Naive thymus-derived CD4-positive, alpha-beta T cell (primary cell): ENCODE measurements at regions of chr1 and their contacts with region 1.

Region 1: GRCh38 chr1:52404116-52404986 is at the starts of genes ORC1 and PRPF38A:
- DNase-seq: peak; percentile 89 to 97 (median 96)
- ATAC-seq: peak; percentile 99
- H3K4me3 ChIP-seq: peak within 1 kb of the TSS; percentile 83
- H3K4me3 Mint-ChIP-seq: peak within 1 kb of the TSS; percentile 96 to 100 (median 99)
- H3K27ac ChIP-seq: peak within 1 kb of the TSS; percentile 92
- H3K27ac Mint-ChIP-seq: peak within 1 kb of the TSS; percentile 95 to 100 (median 98)
- H3K4me1 ChIP-seq: peaks cover 10 to 16% of the 10 kb centered on the region in 2 donors
- H3K4me1 Mint-ChIP-seq: peaks cover 11 to 66% (median 47%) of the 10 kb centered on the region in 7 donors
- H3K27me3 ChIP-seq: no peaks in the 10 kb centered on the region
- H3K27me3 Mint-ChIP-seq: no peaks in the 10 kb centered on the region
- total RNA-seq, gene ORC1: 0.97 to 25.2 (median 1.3) TPM
- total RNA-seq, gene PRPF38A: 62.1 to 98.7 (median 81.6) TPM

Region 2: DNA sequence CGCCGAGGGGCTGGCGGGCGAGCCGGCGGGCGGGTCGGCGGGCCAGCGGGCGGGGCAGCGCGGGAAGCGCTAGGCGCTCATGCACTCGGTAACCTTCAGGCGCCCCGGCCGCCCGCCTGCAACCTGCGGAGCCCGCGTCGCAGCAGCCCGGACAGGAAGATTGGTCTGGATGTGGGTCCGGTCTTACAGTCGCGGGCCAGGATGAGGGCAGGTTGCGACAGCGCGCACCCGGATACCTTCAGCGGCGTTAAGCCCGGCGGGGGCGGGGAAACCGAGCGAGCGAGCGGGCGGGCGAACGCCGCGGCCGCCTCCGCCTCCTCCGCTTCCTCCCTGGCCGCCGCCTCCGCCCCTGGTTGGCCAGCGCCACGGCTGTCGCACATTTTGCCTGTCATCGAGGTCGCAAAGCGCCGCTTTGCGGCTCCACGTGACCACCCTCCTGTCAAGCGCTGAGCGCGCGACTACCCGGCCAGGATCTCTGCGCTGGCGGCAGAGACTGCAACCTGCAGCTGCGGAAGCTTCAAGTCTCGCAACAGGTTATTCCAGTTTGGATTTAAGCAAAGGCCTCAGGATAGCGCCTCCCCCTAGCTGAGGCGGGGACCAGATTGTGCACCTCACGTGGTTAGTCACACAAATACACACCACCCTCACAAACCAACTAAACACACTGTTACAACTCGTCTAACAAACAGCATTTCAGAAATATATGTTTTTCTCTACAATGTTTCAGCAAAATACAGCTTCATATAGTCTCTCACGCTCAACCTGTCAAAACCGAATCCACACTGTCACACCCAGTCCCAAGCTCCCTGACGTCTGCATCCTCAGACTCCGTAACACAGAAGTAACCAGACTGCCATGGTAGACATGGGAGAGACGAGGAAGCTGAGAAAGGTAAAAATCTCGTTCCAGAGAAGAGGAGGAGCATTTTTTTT is 1444.2 kb before region 1 on chr1 and contains the start of gene FAF1:
- CTCF ChIA-PET with region 1: no interaction called
- POLR2A ChIA-PET with region 1: no interaction called
- intact Hi-C with region 1: loop called in 1 of 2 experiments (anchors 10 kb)
- DNase-seq: peak; percentile 94 to 98 (median 98)
- ATAC-seq: peak; percentile 98
- H3K4me3 ChIP-seq: peak within 1 kb of the TSS; percentile 61
- H3K4me3 Mint-ChIP-seq: peak within 1 kb of the TSS; percentile 82 to 98 (median 92)
- H3K27ac ChIP-seq: peak within 1 kb of the TSS; percentile 71
- H3K27ac Mint-ChIP-seq: peak within 1 kb of the TSS; percentile 64 to 97 (median 96)
- H3K4me1 ChIP-seq: peaks cover 7% of the 10 kb centered on the region in 2 donors
- H3K4me1 Mint-ChIP-seq: peaks cover 14 to 35% (median 24%) of the 10 kb centered on the region in 7 donors
- H3K27me3 ChIP-seq: no peaks in the 10 kb centered on the region
- H3K27me3 Mint-ChIP-seq: peaks cover 0 to 9% (median 0%) of the 10 kb centered on the region in 5 donors
- total RNA-seq, gene FAF1: 46.4 to 66.6 (median 52.5) TPM

Region 3: DNA sequence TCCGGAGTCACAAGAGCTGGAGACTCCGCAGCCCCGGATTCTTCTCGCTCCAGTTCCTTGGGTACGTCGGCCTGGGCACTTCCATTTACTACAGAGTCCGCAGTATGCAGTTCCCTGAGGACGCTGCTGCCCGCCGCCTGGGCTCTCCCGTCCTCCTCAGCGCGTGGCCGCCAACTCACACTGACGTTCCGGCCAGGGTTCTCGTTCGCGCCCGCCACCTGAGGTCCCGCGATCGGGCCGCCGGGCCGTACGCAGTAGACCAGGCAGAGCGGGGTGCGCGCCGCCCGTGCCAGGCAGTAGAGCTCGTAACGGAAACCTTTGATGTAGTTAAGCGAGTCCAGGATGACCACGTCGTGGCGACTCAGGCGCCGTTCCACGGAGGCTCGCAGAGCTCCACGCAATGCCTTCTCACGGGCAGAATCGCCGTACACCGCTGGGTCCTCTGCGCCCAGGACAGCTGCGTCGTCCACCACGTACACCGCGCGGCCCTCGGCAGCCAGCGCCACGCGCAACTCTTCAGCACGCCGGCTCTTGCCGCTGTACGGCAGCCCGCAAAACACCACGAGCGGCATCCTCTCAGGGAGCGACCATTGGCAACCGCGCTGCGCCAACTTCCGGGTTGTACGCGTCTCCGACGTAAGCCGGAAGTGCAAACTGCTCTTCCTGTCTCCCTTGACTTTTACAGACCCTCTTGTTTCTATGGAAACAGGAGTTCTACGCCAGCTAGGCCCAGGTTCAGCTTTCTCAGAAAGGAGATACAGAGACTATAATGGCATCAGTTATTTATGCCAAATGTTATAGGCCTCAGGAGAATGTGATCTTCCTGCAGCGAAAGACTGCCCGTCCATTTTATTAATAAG is 370.9 kb before region 1 on chr1 and contains the start of gene KTI12:
- CTCF ChIA-PET with region 1: no interaction called
- POLR2A ChIA-PET with region 1: interaction called, 4 read pairs
- intact Hi-C with region 1: loop called in 1 of 2 experiments (anchors 1 kb)
- DNase-seq: peak; percentile 72 to 92 (median 89)
- ATAC-seq: peak; percentile 95
- H3K4me3 ChIP-seq: peak within 1 kb of the TSS; percentile 94
- H3K4me3 Mint-ChIP-seq: peak within 1 kb of the TSS; percentile 91 to 96 (median 93)
- H3K27ac ChIP-seq: peak within 1 kb of the TSS; percentile 73
- H3K27ac Mint-ChIP-seq: peak within 1 kb of the TSS; percentile 92 to 97 (median 96)
- H3K4me1 ChIP-seq: peaks cover 20 to 22% of the 10 kb centered on the region in 2 donors
- H3K4me1 Mint-ChIP-seq: peaks cover 18 to 52% (median 38%) of the 10 kb centered on the region in 7 donors
- H3K27me3 ChIP-seq: no peaks in the 10 kb centered on the region
- H3K27me3 Mint-ChIP-seq: no peaks in the 10 kb centered on the region
- total RNA-seq, gene KTI12: 14.5 to 23.5 (median 16.5) TPM

Region 4: GRCh38 chr1:52385376-52385775 is 19.0 kb before region 1 on chr1:
- CTCF ChIA-PET with region 1: no interaction called
- POLR2A ChIA-PET with region 1: no interaction called
- intact Hi-C with region 1: no loop called
- DNase-seq: no peak
- ATAC-seq: no peak
- H3K4me3 ChIP-seq: no peak overlapping the region
- H3K4me3 Mint-ChIP-seq: no peak overlapping the region
- H3K27ac ChIP-seq: no peak overlapping the region
- H3K27ac Mint-ChIP-seq: no peak overlapping the region
- H3K4me1 ChIP-seq: no peaks in the 10 kb centered on the region
- H3K4me1 Mint-ChIP-seq: peaks cover 0 to 2% (median 0%) of the 10 kb centered on the region in 7 donors
- H3K27me3 ChIP-seq: no peaks in the 10 kb centered on the region
- H3K27me3 Mint-ChIP-seq: no peaks in the 10 kb centered on the region

Region 5: GRCh38 chr1:52636721-52637695 is 232.7 kb after region 1 on chr1:
- CTCF ChIA-PET with region 1: interaction called, 3 read pairs
- POLR2A ChIA-PET with region 1: interaction called, 9 read pairs
- intact Hi-C with region 1: loop called (anchors 1 kb)
- DNase-seq: peak; percentile 39 to 88 (median 83)
- ATAC-seq: peak; percentile 79
- H3K4me3 ChIP-seq: peak overlapping the region; percentile 19
- H3K4me3 Mint-ChIP-seq: peak overlapping the region; percentile 78 to 94 (median 86)
- H3K27ac ChIP-seq: peak overlapping the region; percentile 95
- H3K27ac Mint-ChIP-seq: peak overlapping the region; percentile 96 to 100 (median 99)
- H3K4me1 ChIP-seq: peaks cover 63 to 82% of the 10 kb centered on the region in 2 donors
- H3K4me1 Mint-ChIP-seq: peaks cover 52 to 85% (median 79%) of the 10 kb centered on the region in 7 donors
- H3K27me3 ChIP-seq: no peaks in the 10 kb centered on the region
- H3K27me3 Mint-ChIP-seq: peaks cover 0 to 11% (median 0%) of the 10 kb centered on the region in 5 donors

Region 6: GRCh38 chr1:52674497-52675384 is 270.4 kb after region 1 on chr1:
- CTCF ChIA-PET with region 1: no interaction called
- POLR2A ChIA-PET with region 1: no interaction called
- intact Hi-C with region 1: no loop called
- DNase-seq: no peak
- ATAC-seq: no peak
- H3K4me3 ChIP-seq: no peak overlapping the region
- H3K4me3 Mint-ChIP-seq: peak overlapping the region in 1 of 10 donors; percentile 28
- H3K27ac ChIP-seq: no peak overlapping the region
- H3K27ac Mint-ChIP-seq: peak overlapping the region in 4 of 9 donors; percentile 55 to 67 (median 58)
- H3K4me1 ChIP-seq: no peaks in the 10 kb centered on the region
- H3K4me1 Mint-ChIP-seq: peaks cover 0 to 18% (median 4%) of the 10 kb centered on the region in 7 donors
- H3K27me3 ChIP-seq: no peaks in the 10 kb centered on the region
- H3K27me3 Mint-ChIP-seq: no peaks in the 10 kb centered on the region

Region 7: DNA sequence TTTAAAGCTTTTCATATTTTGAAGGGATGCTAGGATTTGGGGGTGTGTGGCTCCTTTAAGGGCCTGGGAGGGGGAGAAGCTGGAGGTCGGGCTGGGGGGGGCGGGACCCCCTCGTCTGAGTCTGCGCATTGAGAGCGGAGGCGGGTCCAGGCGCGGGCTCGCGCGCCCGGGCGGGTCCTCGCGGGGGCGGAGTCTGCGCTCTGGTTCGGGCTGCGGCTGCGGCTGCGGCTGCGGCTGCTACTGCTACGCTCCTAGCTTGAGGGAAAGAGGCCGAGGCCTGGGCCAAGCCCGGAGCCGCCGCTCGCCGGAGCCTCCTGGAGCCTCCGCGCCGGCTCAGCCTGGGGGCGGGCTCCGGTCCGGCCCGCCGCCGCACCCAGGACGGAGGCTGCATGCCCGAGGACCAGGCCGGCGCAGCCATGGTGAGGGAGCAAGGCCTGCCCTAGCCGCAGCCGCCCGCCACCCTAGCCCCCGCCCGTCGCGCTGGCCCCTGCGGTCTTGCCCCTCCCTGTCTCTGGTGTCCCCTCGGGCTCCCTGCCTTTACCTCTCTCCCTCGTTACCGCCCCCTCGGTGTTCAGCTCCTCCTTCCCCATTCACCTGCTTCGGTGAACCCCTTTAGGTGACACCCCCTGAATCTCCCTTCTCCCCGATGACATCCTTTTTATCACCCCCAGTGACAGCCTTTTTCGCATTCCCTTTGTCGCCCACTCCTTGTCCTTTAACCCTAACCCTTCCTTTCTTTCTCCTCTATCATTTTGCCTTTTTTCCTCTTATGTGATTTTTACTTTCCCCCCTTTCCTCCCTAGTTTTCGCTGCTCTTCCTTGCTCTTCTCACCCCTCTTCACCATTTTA is 322.1 kb after region 1 on chr1 and contains the start of gene ZYG11B:
- CTCF ChIA-PET with region 1: no interaction called
- POLR2A ChIA-PET with region 1: no interaction called
- intact Hi-C with region 1: loop called in 1 of 2 experiments (anchors 1 kb)
- DNase-seq: peak; percentile 80 to 93 (median 88)
- ATAC-seq: peak; percentile 97
- H3K4me3 ChIP-seq: peak within 1 kb of the TSS; percentile 85
- H3K4me3 Mint-ChIP-seq: peak within 1 kb of the TSS; percentile 88 to 99 (median 97)
- H3K27ac ChIP-seq: peak within 1 kb of the TSS; percentile 89
- H3K27ac Mint-ChIP-seq: peak within 1 kb of the TSS; percentile 72 to 97 (median 90)
- H3K4me1 ChIP-seq: peaks cover 12 to 19% of the 10 kb centered on the region in 2 donors
- H3K4me1 Mint-ChIP-seq: peaks cover 24 to 60% (median 54%) of the 10 kb centered on the region in 7 donors
- H3K27me3 ChIP-seq: no peaks in the 10 kb centered on the region
- H3K27me3 Mint-ChIP-seq: peaks cover 0 to 6% (median 0%) of the 10 kb centered on the region in 5 donors
- total RNA-seq, gene ZYG11B: 14.9 to 26.8 (median 17.9) TPM

Region 8: DNA sequence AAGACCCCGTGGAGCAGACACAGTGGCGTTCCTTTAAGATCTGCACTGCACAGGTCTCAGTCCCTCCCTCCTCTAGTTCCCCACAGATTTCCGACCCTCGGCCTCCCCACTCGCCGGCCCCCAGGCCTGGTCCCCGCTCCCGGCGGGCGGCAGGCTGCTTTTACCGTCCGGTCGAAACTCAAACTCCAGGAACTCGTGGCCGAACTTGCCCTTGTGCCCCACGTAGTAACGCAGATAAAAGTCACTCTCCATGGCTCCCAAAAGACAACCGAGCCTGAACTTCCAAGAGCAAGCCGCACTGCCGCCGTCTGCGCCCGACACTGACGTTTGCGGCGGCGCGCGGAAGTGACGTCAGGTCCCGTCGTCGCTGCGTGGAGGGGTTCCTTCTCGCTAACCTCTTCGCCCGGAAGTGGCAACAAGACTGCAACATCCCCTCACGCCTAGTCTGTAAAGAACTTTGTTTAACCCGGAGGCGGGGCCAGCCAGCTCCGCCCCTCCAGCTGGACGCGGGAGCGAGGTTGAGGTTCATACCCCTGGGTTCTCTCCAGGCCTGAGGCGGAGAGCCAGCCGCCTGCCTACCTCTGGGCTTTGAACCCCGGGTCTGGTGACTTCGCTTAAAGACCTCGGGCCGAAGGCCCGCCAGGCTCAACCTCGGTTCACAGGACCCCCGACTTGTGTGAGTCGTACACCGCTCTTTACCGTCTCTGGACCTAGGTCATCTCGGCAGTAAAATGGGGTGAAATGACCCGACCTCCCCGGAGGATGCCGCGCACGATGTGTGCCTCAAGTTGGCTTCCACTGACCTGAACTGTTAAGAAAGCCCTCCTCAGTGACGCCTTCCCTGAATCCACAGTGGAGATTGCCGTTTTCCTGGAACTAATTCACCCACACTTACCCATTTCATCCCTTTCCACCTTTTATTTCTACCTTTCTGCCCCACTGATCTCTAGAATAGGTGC is 834.1 kb after region 1 on chr1 and contains the start of gene MAGOH:
- CTCF ChIA-PET with region 1: no interaction called
- POLR2A ChIA-PET with region 1: no interaction called
- intact Hi-C with region 1: loop called in 1 of 2 experiments (anchors 1 kb)
- DNase-seq: peak; percentile 90 to 96 (median 95)
- ATAC-seq: peak; percentile 98
- H3K4me3 ChIP-seq: peak within 1 kb of the TSS; percentile 97
- H3K4me3 Mint-ChIP-seq: peak within 1 kb of the TSS; percentile 96 to 99 (median 98)
- H3K27ac ChIP-seq: peak within 1 kb of the TSS; percentile 94
- H3K27ac Mint-ChIP-seq: peak within 1 kb of the TSS; percentile 92 to 99 (median 98)
- H3K4me1 ChIP-seq: peaks cover 18 to 19% of the 10 kb centered on the region in 2 donors
- H3K4me1 Mint-ChIP-seq: peaks cover 18 to 47% (median 32%) of the 10 kb centered on the region in 7 donors
- H3K27me3 ChIP-seq: no peaks in the 10 kb centered on the region
- H3K27me3 Mint-ChIP-seq: peaks cover 0 to 2% (median 0%) of the 10 kb centered on the region in 5 donors
- total RNA-seq, gene MAGOH: 37.7 to 76.7 (median 52.3) TPM